ENCODE measurements at regions of chr7 and their contacts with region 1.

Region 1: GRCh38 chr7:604001-604883 is 84.6 kb upstream of the PDGFA start:
- DNase-seq: peak; percentile 97
- H3K4me3 Mint-ChIP-seq: peak overlapping the region; percentile 96
- H3K27ac Mint-ChIP-seq: peak overlapping the region; percentile 100
- H3K4me1 Mint-ChIP-seq: peaks cover 45% of the 10 kb centered on the region
- H3K27me3 Mint-ChIP-seq: no peaks in the 10 kb centered on the region

Region 2: GRCh38 chr7:518630-519483 is 85.4 kb before region 1 on chr7:
- intact Hi-C with region 1: loop called (anchors 5 kb)
- DNase-seq: peak; percentile 82
- H3K4me3 Mint-ChIP-seq: peak overlapping the region; percentile 83
- H3K27ac Mint-ChIP-seq: peak overlapping the region; percentile 71
- H3K4me1 Mint-ChIP-seq: peaks cover 12% of the 10 kb centered on the region
- H3K27me3 Mint-ChIP-seq: peaks cover 38% of the 10 kb centered on the region

Region 3: DNA sequence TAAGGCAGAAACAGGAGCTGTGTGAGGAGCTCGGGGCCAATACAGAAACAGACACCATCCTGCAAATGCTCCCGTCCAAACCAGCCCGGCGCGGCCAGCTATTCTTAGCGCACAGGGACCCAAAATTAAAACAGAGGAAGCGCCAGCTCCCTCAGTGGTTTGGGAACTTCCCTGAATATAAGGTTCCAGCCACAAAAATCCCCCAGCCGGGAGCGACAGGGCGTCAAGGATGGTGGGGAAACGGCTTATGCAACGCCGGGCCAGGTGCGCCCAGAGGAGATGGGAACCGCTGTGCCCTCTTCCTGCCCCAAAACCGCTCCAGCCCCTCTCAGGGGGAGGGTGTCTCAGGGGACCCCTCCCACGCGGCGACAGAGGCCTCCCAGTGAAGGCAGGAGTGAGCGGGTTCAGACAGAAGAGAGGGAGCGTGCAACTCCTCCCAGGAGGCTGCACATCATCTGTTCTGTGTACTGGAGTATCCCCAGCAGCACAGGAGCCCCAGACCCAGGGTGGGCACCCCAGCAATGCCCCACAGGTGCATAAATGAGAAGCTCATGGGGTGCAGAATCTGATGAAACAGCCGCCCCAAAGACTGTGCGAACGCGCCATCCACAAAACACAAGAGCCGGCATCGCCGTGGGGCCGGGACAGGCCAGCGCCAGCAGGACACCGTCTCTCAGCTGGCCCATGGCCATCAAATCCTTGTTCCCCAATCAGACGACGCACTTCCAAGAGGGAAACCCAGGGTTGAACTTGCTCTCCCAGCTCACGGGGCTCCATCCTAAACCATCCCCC is 10.7 kb before region 1 on chr7:
- intact Hi-C with region 1: loop called (anchors 1 kb)
- DNase-seq: peak; percentile 68
- H3K4me3 Mint-ChIP-seq: peak overlapping the region; percentile 26
- H3K27ac Mint-ChIP-seq: peak overlapping the region; percentile 76
- H3K4me1 Mint-ChIP-seq: peaks cover 19% of the 10 kb centered on the region
- H3K27me3 Mint-ChIP-seq: no peaks in the 10 kb centered on the region

Region 4: DNA sequence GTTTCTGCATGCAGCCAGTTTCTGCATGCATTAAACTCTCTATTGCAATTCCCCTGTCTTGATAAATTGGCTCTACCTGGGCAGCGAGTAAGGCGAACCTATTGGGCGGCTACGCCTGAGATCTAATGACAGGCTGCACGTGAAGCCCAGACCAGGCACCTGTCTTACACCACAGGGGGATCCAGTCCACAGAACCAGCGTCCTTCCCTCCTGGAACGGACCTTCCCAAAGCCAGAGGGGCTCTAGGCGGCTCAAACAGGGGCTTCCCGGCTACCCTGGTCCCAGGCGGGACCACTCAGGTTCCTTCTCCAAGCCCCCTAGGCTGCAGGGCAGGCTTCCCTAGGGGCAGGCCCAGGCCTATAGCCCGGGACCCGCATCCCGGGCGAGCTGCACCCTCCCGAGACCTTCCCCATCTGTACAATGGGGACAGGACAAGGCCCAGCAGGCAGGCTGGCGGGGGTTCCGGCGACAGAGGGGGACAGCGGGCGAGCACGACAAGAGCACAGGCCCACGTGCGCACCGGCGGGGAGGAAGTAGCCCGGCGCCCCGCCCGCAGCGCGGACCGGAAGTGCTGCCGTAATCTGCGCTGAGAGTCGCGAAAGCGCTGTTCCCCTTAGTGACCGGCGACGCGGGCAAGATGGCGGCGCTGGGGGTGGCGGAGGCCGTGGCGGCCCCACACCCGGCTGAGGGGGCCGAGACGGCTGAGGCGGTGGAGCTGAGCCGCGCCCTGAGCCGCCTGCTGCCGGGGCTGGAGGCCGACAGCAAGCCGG is 122.0 kb after region 1 on chr7 and contains the start of gene DNAAF5:
- intact Hi-C with region 1: loop called (anchors 1 kb)
- DNase-seq: peak; percentile 97
- H3K4me3 Mint-ChIP-seq: peak within 1 kb of the TSS; percentile 95
- H3K27ac Mint-ChIP-seq: peak within 1 kb of the TSS; percentile 96
- H3K4me1 Mint-ChIP-seq: peaks cover 18% of the 10 kb centered on the region
- H3K27me3 Mint-ChIP-seq: no peaks in the 10 kb centered on the region
- total RNA-seq, gene DNAAF5: 49.4 and 50.6 TPM in 2 replicates

Region 5: DNA sequence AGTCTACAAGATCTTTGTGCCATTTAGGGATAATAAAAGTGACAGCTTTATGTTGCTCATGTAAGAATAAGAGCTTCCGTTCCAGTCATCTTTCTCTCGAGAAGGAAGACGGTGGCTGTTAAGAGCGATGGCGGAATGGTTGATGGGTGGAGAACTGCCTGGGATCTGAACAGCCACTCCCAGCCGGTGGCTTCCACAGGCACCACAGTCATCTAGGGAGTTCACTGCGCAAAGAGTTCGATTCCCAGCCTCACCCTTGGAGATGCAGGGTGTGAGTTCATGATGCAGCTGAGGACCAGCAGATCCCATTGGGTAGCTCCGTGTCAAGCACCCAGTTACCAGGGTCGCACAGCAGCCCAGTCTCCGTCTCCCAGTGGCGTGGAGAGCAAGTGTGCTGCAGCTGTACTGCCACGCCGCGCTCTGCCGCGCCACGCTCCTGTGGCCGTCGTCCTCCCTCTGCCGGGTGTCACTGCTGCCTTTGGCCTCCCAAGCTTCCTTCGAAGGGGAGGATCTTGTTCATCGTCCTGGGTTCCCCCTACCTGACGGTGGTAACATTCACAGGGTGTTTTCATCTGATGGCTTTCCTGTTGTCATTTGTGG is 235.9 kb after region 1 on chr7:
- intact Hi-C with region 1: no loop called
- DNase-seq: no peak
- H3K4me3 Mint-ChIP-seq: no peak overlapping the region
- H3K27ac Mint-ChIP-seq: no peak overlapping the region
- H3K4me1 Mint-ChIP-seq: peaks cover 5% of the 10 kb centered on the region
- H3K27me3 Mint-ChIP-seq: no peaks in the 10 kb centered on the region

Region 6: DNA sequence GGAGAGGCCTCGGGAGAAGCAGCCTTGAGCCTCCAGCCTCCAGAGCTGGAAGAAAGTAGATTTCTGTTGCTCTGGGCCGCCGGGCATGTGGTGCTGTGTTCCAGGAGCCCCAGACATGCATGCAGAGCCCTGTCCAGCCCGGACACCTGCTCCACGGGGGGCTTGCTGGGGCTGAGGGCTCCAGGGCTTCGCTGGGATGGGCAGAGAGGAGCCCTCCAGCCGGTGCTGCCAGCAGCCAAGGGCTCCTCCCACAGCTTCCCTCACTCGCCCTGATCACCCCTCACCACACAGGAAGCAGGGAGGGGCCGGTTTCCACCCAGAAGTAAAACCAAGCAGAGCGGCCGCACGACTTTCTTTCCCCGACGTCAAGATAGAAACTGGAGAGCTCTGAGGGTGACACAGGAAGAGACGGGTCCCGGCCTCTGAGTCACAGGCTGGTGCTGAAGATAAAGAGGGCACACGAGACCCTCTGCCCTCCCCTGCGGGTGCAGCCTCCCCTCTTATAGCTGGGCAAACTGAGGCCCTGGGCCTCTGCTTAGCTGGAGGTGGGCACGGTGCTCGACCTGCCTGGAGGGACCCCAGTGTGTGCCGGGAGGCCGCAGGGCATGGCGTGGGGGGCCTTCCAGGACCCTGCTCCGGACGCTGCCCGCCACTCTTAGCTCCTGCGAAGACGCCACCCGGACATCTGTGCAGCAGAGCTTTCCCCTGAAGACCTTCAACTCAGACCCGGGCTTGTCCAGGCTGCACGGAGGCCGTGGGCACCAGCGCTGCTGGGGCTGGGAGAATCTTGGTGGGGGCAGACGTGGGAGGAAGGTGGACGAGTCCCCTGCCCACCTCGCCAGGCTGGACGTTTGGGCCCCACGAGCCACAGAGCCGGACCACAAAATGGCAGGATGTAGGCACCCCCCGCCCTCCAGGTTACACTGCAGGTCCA is 319.1 kb after region 1 on chr7:
- intact Hi-C with region 1: loop called (anchors 5 kb)
- DNase-seq: peak; percentile 97
- H3K4me3 Mint-ChIP-seq: peak overlapping the region; percentile 87
- H3K27ac Mint-ChIP-seq: peak overlapping the region; percentile 96
- H3K4me1 Mint-ChIP-seq: peaks cover 34% of the 10 kb centered on the region
- H3K27me3 Mint-ChIP-seq: no peaks in the 10 kb centered on the region